Posterior cingulate gyrus (tissue), 11 donors: ENCODE measurements at regions of chr11 and their contacts with region 1.

Region 1: GRCh38 chr11:82927254-82927880 is 25.8 kb downstream of the DDIAS start:
- DNase-seq: no peak

Region 2: GRCh38 chr11:82823647-82824619 is 103.4 kb before region 1 on chr11:
- intact Hi-C with region 1: no loop called
- DNase-seq: no peak

Region 3: GRCh38 chr11:83002053-83002452 is 74.7 kb after region 1 on chr11:
- intact Hi-C with region 1: loop called (anchors 2 kb)
- DNase-seq: no peak